ENCODE measurements at regions of chr6 and their contacts with region 1.

Region 1: GRCh38 chr6:114714836-114715507 is 372.1 kb upstream of the HS3ST5 start:
- DNase-seq: no peak
- ATAC-seq: no peak
- H3K4me3 ChIP-seq: no peak overlapping the region
- H3K27ac ChIP-seq: no peak overlapping the region
- H3K4me1 ChIP-seq: no peaks in the 10 kb centered on the region
- H3K27me3 ChIP-seq: no peaks in the 10 kb centered on the region
- CTCF ChIP-seq: no peak
- EP300 ChIP-seq: no peak
- POLR2A ChIP-seq: no peak
- RAD21 ChIP-seq: no peak

Region 2: DNA sequence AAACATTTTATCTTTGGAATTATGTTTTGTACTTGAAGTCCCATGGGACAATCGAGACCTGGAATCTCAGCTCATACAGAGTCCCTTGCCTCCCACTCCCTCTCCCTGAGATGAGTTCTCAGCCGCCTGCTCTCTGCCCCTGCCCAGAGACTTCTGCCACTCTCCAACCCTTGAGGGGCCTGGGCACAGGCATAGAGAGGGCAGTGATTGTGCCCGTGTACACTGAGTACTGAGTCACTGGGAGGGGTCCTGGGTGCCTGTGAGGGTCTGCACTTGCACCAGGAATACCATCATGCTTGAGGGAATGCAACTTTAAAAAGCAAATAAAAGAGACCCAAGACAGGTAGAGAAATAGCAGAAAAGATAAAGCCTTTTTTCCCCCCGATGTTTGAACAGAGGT is 81.6 kb after region 1 on chr6:
- CTCF ChIA-PET with region 1: no interaction called
- POLR2A ChIA-PET with region 1: no interaction called
- in situ Hi-C with region 1: loop called (anchors 5 kb)
- intact Hi-C with region 1: no loop called
- DNase-seq: no peak
- ATAC-seq: no peak
- H3K4me3 ChIP-seq: no peak overlapping the region
- H3K27ac ChIP-seq: no peak overlapping the region
- H3K4me1 ChIP-seq: no peaks in the 10 kb centered on the region
- H3K27me3 ChIP-seq: no peaks in the 10 kb centered on the region
- CTCF ChIP-seq: no peak
- EP300 ChIP-seq: no peak
- POLR2A ChIP-seq: no peak
- RAD21 ChIP-seq: no peak

Measured in K562 (cell line).